SK-N-SH (cell line): ENCODE measurements at regions of chr7 and their contacts with region 1.

Region 1: GRCh38 chr7:48109848-48110663 is 21.0 kb downstream of the UPP1 start:
- DNase-seq: peak; percentile 85
- H3K4me3 ChIP-seq: no peak overlapping the region; a peak in 1 of 4 replicates
- H3K27ac ChIP-seq: no peak overlapping the region
- H3K4me1 ChIP-seq: peaks cover 0 to 4% of the 10 kb centered on the region in 2 experiments; a peak in 1 of 4 replicates
- H3K27me3 ChIP-seq: no peaks in the 10 kb centered on the region
- CTCF ChIP-seq: peak; percentile 100
- EP300 ChIP-seq: no peak
- RAD21 ChIP-seq: peak; percentile 95

Region 2: DNA sequence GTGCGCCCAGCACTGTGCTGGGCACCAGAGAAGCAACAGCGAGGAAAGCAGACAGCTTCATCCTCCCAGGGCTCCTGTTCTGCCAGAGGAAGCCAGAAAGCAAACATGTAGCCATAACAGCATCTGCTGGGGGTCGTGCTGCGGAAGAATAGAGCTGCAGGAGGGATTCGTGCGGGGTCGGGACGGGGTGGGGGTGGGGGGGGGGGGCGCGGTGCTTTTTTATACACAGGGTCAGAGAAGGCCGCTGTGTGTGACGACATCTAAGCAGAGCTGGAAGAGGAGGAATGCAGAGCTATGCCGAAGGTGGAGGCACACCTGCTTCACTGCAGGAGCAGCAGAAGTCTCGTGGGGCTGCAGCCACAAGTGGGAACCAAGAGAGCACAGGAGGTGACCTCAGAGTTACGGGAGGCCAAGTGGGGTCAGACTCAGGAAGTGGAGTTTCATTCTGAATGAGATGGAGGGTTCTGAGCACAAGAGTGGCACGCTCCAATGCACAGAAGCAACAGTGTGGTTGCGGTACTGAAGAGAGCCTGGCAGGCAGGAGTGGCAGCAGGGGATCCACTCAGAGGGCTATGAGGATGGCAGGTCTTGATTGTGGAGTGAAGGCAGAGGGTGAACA is 172.9 kb before region 1 on chr7:
- CTCF ChIA-PET with region 1: interaction called, 39 read pairs
- POLR2A ChIA-PET with region 1: no interaction called
- DNase-seq: no peak
- H3K4me3 ChIP-seq: no peak overlapping the region
- H3K27ac ChIP-seq: no peak overlapping the region
- H3K4me1 ChIP-seq: peaks cover 18 to 26% of the 10 kb centered on the region in 2 experiments
- H3K27me3 ChIP-seq: no peaks in the 10 kb centered on the region
- CTCF ChIP-seq: no peak
- EP300 ChIP-seq: no peak
- RAD21 ChIP-seq: no peak

Region 3: DNA sequence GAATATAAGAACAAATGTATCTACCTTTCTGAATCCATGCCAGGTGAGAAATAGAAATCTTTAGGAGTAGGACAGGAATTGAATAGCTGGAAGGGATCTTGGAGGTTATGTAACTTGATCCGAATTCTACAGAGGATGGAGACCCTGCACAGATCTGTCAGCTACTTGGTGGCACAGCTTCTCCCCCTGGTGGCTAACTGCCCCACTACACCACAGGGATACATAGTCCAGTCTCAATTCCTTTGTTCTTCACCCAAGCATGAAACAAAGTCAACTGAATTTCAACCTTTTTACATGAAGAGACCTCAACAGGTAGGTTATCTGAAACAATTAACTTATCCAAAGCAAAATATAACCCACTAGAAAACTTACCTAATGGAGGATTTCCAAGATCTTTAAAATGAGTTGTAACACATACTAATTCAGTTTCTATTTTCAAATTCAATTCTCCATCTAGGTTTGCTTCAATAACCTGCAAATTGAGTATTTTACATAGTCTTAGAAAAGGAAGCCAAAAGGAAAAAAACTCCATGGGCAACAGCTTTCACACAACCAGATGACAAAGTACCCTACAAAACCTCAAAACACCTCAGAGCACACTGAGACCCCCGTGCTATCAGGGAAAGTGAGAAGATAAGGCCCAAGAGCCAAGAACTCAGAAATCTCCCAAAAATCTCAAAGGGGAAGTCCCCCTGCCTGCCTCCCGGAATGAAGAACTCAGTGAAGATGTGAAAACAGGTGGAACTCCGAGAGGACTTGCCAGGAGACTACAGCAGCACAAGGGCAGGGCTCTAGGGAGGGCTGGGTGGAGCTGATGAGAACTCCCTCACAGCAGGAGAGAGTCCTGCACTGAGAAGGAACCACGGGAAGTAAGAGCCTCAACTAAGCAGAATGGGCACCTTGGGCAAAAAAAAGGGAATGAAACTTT is 140.9 kb before region 1 on chr7:
- CTCF ChIA-PET with region 1: interaction called, 63 read pairs
- POLR2A ChIA-PET with region 1: no interaction called
- DNase-seq: peak; percentile 89
- H3K4me3 ChIP-seq: no peak overlapping the region; a peak in 1 of 4 replicates
- H3K27ac ChIP-seq: no peak overlapping the region
- H3K4me1 ChIP-seq: peaks cover 0 to 2% of the 10 kb centered on the region in 2 experiments; a peak in 2 of 4 replicates
- H3K27me3 ChIP-seq: no peaks in the 10 kb centered on the region
- CTCF ChIP-seq: peak; percentile 100
- EP300 ChIP-seq: no peak
- RAD21 ChIP-seq: peak; percentile 82

Region 4: GRCh38 chr7:48035301-48035966 is 74.6 kb before region 1 on chr7 and contains the start of gene C7orf57:
- CTCF ChIA-PET with region 1: interaction called, 11 read pairs
- POLR2A ChIA-PET with region 1: no interaction called
- DNase-seq: peak; percentile 99
- H3K4me3 ChIP-seq: peak within 1 kb of the TSS; percentile 72 to 73
- H3K27ac ChIP-seq: no peak within 1 kb of the TSS
- H3K4me1 ChIP-seq: peaks cover 6 to 12% of the 10 kb centered on the region in 2 experiments; a peak in 1 of 4 replicates
- H3K27me3 ChIP-seq: peaks cover 5% of the 10 kb centered on the region; the same call in 1 of the 2 replicates
- CTCF ChIP-seq: peak; percentile 20; the same call in 1 of the 2 replicates
- EP300 ChIP-seq: no peak
- RAD21 ChIP-seq: no peak; the same call in 1 of the 2 replicates
- polyA plus RNA-seq, gene C7orf57: 0.41 and 0.71 TPM in 2 replicates

Region 5: GRCh38 chr7:48094751-48095562 is 15.1 kb before region 1 on chr7:
- CTCF ChIA-PET with region 1: interaction called, 63 read pairs
- POLR2A ChIA-PET with region 1: no interaction called
- DNase-seq: no peak
- H3K4me3 ChIP-seq: no peak overlapping the region
- H3K27ac ChIP-seq: peak overlapping the region; percentile 18 to 46; a peak in 3 of 4 replicates
- H3K4me1 ChIP-seq: peaks cover 3 to 18% of the 10 kb centered on the region in 2 experiments; a peak in 3 of 4 replicates
- H3K27me3 ChIP-seq: no peaks in the 10 kb centered on the region
- CTCF ChIP-seq: no peak
- EP300 ChIP-seq: no peak
- RAD21 ChIP-seq: no peak